Activated CD8-positive, alpha-beta T cell treated with anti-CD3 and anti-CD28 coated beads for 36 hours (primary cell): ENCODE measurements at regions of chr14 and their contacts with region 1.

Region 1: GRCh38 chr14:60649875-60650372 is 647 bp upstream of the SIX1 start:
- DNase-seq: no peak
- ATAC-seq: no peak
- H3K4me3 Mint-ChIP-seq: peak overlapping the region; percentile 32
- H3K27ac Mint-ChIP-seq: no peak overlapping the region
- H3K4me1 Mint-ChIP-seq: peaks cover 55% of the 10 kb centered on the region
- H3K27me3 Mint-ChIP-seq: peaks cover 85% of the 10 kb centered on the region
- CTCF ChIP-seq: no peak

Region 2: DNA sequence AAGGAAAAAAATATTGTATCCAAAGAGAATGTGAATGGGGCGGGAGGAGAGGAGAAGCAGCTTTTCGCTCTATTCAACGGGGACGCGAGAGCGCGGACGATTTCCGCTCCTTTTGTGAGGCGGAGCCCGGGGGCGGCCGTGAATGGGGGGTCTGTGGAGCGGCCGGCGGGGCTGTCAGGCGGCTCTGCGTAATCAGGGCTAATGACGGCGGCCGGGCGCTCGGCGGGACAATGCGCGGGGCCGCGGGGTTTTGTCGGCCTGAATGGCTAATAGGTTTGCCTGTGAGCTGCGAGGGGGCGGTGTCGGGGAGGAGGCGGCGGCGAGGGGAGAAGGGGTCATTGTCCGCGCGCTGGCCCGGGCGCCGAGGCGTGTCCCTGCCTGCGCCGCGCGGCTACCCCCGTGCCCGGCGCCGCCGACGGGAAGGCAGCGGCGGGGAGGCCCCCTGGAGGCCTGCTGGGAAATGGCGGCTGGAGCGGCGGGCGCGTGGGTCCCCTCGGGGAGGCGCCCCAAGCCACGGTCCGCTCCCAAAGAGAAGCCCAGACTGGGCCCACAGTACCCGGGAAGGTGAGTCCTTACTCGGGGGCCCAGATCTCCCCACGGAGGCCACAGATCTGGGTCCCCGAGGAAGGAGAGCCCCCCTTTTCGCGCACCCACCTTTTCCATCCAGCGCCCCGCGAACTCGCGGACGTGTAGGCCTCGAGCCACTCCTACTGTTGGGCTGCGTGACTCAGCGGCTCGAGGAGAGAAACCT is 135.0 kb before region 1 on chr14:
- CTCF ChIA-PET with region 1: no interaction called
- POLR2A ChIA-PET with region 1: interaction called, 3 read pairs
- intact Hi-C with region 1: loop called (anchors 5 kb)
- DNase-seq: peak; percentile 27
- ATAC-seq: peak; percentile 62
- H3K4me3 Mint-ChIP-seq: peak overlapping the region; percentile 47
- H3K27ac Mint-ChIP-seq: no peak overlapping the region
- H3K4me1 Mint-ChIP-seq: peaks cover 20% of the 10 kb centered on the region
- H3K27me3 Mint-ChIP-seq: peaks cover 60% of the 10 kb centered on the region
- CTCF ChIP-seq: peak; percentile 59

Region 3: GRCh38 chr14:60599727-60600126 is 50.2 kb before region 1 on chr14:
- CTCF ChIA-PET with region 1: no interaction called
- POLR2A ChIA-PET with region 1: no interaction called
- intact Hi-C with region 1: no loop called
- DNase-seq: no peak
- ATAC-seq: no peak
- H3K4me3 Mint-ChIP-seq: no peak overlapping the region
- H3K27ac Mint-ChIP-seq: no peak overlapping the region
- H3K4me1 Mint-ChIP-seq: no peaks in the 10 kb centered on the region
- H3K27me3 Mint-ChIP-seq: peaks cover 19% of the 10 kb centered on the region
- CTCF ChIP-seq: no peak

Region 4: GRCh38 chr14:60724137-60724619 is 74.3 kb after region 1 on chr14 and contains the start of gene SIX4:
- CTCF ChIA-PET with region 1: no interaction called
- POLR2A ChIA-PET with region 1: no interaction called
- intact Hi-C with region 1: loop called (anchors 5 kb)
- DNase-seq: peak; percentile 51
- ATAC-seq: peak; percentile 25
- H3K4me3 Mint-ChIP-seq: peak within 1 kb of the TSS; percentile 80
- H3K27ac Mint-ChIP-seq: no peak within 1 kb of the TSS
- H3K4me1 Mint-ChIP-seq: peaks cover 16% of the 10 kb centered on the region
- H3K27me3 Mint-ChIP-seq: peaks cover 65% of the 10 kb centered on the region
- CTCF ChIP-seq: no peak
- total RNA-seq, gene SIX4: not detected